MCF 10A (cell line): ENCODE measurements at regions of chr20 and their contacts with region 1.

Region 1: DNA sequence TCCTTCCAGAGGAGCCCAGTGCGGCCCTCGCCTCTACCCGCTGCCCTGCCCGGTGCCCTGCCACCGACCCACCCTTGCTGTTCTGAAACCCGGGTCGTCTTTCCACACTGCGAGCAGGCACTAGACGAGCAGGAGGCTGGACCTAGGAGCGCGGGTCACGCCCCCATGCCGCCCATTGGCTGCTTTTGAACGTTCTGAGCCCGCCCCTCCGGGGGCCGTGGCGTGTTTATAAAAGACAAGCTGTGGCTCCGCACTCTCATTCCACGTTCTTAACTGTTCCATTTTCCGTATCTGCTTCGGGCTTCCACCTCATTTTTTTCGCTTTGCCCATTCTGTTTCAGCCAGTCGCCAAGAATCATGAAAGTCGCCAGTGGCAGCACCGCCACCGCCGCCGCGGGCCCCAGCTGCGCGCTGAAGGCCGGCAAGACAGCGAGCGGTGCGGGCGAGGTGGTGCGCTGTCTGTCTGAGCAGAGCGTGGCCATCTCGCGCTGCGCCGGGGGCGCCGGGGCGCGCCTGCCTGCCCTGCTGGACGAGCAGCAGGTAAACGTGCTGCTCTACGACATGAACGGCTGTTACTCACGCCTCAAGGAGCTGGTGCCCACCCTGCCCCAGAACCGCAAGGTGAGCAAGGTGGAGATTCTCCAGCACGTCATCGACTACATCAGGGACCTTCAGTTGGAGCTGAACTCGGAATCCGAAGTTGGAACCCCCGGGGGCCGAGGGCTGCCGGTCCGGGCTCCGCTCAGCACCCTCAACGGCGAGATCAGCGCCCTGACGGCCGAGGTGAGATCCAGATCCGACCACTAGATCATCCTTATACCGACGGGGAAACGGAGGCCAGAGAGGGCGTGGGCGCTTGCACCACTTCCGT is at the start of gene ID1:
- DNase-seq: peak; percentile 98
- H3K4me3 Mint-ChIP-seq: peak within 1 kb of the TSS; percentile 88
- H3K27ac Mint-ChIP-seq: peak within 1 kb of the TSS; percentile 81
- H3K4me1 Mint-ChIP-seq: peaks cover 24% of the 10 kb centered on the region
- H3K27me3 Mint-ChIP-seq: no peaks in the 10 kb centered on the region
- CTCF ChIP-seq: no peak
- total RNA-seq, gene ID1: 35.7 and 38.4 TPM in 2 replicates

Region 2: GRCh38 chr20:31547017-31547675 is 58.1 kb before region 1 on chr20:
- CTCF ChIA-PET with region 1: interaction called, 1,902 read pairs
- POLR2A ChIA-PET with region 1: interaction called, 1,321 read pairs
- intact Hi-C with region 1: no loop called
- DNase-seq: peak; percentile 87
- H3K4me3 Mint-ChIP-seq: peak overlapping the region; percentile 82
- H3K27ac Mint-ChIP-seq: peak overlapping the region; percentile 97
- H3K4me1 Mint-ChIP-seq: peaks cover 14% of the 10 kb centered on the region
- H3K27me3 Mint-ChIP-seq: no peaks in the 10 kb centered on the region
- CTCF ChIP-seq: no peak

Region 3: GRCh38 chr20:31572701-31573554 is 32.3 kb before region 1 on chr20:
- CTCF ChIA-PET with region 1: interaction called, 1,902 read pairs
- POLR2A ChIA-PET with region 1: interaction called, 1,321 read pairs
- intact Hi-C with region 1: loop called (anchors 1 kb)
- DNase-seq: peak; percentile 99
- H3K4me3 Mint-ChIP-seq: peak overlapping the region; percentile 87
- H3K27ac Mint-ChIP-seq: peak overlapping the region; percentile 96
- H3K4me1 Mint-ChIP-seq: peaks cover 27% of the 10 kb centered on the region
- H3K27me3 Mint-ChIP-seq: no peaks in the 10 kb centered on the region
- CTCF ChIP-seq: no peak

Region 4: DNA sequence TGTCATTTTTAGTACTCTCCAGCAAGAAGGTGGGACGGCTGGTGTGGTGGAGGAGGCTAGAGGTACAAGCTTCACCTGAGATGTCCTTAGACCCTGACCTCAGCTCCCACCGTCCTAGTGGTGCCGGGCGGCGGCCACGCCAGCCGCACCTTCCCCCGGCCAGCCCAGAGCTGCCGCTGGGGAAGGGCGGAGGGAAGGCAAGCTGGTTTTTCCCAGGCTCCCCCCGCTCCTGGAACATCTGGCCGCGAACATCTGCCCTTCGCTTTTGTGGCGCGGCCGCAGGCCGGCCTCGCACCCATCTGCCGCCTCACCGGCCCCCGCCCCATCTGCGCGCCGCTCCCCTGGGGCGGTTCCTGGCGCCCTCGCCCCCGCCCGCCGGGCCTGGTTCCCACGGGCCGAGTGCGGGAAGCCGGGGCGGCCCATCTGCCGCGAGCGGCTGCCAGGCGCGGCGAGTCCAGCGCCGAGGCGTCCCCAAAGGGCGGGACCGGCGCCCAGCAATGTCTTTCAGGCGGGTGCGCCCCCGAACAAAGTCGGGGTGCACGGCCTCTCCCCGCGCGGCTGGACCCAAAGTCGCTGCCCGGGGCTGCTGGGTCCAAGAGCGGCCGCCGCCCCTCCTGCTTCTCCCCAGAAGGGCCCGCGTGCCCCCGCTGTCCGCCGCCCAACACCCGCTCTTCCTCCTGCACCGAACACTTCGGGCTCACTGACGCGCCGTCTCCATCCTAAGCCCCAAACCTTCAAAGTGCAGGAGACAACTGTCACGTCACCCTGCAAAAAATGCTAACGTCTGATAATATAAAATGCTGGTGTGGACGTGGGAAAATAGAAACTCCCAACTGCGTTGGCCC is 17.5 kb before region 1 on chr20:
- CTCF ChIA-PET with region 1: interaction called, 79 read pairs
- POLR2A ChIA-PET with region 1: interaction called, 236 read pairs
- intact Hi-C with region 1: loop called (anchors 2 kb)
- DNase-seq: no peak
- H3K4me3 Mint-ChIP-seq: peak overlapping the region; percentile 55
- H3K27ac Mint-ChIP-seq: no peak overlapping the region
- H3K4me1 Mint-ChIP-seq: peaks cover 6% of the 10 kb centered on the region
- H3K27me3 Mint-ChIP-seq: no peaks in the 10 kb centered on the region
- CTCF ChIP-seq: no peak

Region 5: DNA sequence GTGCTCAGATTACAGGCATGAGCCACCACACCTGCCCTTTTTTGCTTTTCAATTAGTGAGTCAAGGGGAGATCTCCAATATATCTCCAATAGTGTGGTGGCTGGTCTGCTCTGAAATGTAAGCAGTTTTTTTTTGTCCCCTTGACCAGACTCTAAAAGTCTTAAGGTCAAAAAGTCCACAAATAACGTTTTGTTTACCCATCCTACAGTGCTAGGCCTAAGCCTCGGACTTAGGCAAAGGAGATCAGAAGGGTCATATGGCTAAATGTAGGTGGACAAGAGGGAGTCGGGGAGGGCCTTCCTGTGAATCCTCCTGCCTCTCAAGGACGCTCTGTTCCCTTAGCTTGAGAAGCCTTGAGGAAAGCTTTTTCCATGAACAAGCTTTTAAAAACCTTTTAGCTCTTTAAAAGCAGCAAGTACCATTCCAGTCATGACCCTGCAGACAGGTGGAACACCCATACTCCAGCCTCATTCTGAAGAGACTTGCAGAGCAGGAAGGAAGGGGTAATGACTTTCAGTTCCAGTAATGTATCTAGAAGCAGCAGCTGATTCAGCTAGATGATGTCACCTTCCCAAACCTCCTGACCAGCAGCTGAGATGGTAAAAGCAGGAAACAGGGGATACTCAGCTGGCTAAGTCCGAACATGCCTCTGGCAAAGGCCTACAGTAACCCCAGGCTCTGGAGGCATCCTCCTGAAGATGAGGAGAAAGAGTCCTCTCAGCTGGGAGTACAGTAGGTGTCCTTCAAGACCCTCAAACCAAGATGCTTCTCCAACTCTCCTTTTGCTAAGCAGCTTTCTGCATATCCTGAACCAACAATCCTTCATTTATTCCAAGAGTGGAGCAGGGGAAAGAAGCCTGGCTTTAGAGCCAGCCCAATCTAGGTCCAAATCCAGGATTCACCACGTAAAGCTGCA is 93.8 kb after region 1 on chr20:
- CTCF ChIA-PET with region 1: interaction called, 8 read pairs
- POLR2A ChIA-PET with region 1: interaction called, 101 read pairs
- intact Hi-C with region 1: no loop called
- DNase-seq: peak; percentile 76
- H3K4me3 Mint-ChIP-seq: peak overlapping the region; percentile 52
- H3K27ac Mint-ChIP-seq: peak overlapping the region; percentile 97
- H3K4me1 Mint-ChIP-seq: peaks cover 55% of the 10 kb centered on the region
- H3K27me3 Mint-ChIP-seq: no peaks in the 10 kb centered on the region
- CTCF ChIP-seq: no peak

Region 6: GRCh38 chr20:31712564-31713311 is 107.5 kb after region 1 on chr20:
- CTCF ChIA-PET with region 1: interaction called, 4 read pairs
- POLR2A ChIA-PET with region 1: interaction called, 101 read pairs
- intact Hi-C with region 1: no loop called
- DNase-seq: peak; percentile 92
- H3K4me3 Mint-ChIP-seq: peak overlapping the region; percentile 70
- H3K27ac Mint-ChIP-seq: peak overlapping the region; percentile 96
- H3K4me1 Mint-ChIP-seq: peaks cover 78% of the 10 kb centered on the region
- H3K27me3 Mint-ChIP-seq: no peaks in the 10 kb centered on the region
- CTCF ChIP-seq: no peak